Esophagus squamous epithelium (tissue), 5 donors: ENCODE measurements at regions of chr3 and their contacts with region 1.

Region 1: GRCh38 chr3:53195602-53196574 is 34.9 kb downstream of the PRKCD start:
- DNase-seq: no peak
- H3K4me3 ChIP-seq: peak overlapping the region in 1 of 4 donors; percentile 13
- H3K27ac ChIP-seq: no peak overlapping the region
- H3K4me1 ChIP-seq: peaks cover 0 to 45% (median 11%) of the 10 kb centered on the region in 3 donors
- H3K27me3 ChIP-seq: no peaks in the 10 kb centered on the region
- CTCF ChIP-seq: peak; percentile 97 to 100 (median 98)
- POLR2A ChIP-seq: no peak

Region 2: DNA sequence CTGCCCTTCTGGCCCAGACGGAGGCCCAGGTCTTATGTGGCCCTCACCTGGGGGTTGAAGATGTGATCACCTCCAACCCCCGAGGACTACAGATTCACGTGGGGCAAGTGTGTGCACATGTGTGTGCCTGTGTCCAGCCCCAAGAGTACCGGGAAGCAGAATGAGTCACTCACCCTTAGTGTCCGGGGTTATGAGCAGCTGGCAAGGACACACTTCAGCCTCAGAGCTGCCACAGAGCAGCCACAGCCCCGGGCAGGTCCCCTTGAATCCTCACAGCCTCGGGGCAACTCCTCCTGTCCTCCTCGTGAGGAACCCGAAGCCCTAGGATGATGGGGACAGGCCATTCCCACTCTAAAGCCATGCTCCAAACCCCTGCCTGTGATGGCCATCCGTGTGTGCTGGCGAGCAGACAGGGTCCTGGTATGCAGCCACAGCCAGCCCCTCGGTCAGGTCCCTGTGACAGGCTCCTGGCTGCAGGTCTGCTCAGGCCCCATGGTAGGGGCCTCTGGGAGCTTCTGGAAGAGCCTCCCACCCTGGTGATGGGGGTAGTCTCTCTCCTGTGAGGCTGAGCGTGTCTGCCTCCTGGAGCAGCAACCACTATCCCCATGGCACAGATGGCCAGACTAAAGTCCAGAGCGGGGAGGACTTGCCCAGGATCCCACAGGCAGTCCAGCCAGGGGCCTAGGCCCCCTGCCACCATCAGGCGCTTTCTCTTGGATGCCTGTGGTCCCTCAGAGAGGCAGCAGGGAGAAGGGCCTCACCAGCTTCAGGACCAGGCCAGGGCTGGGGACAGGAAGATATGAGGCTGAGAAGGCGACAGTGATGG is 699.9 kb before region 1 on chr3:
- intact Hi-C with region 1: no loop called
- DNase-seq: no peak
- H3K4me3 ChIP-seq: peak overlapping the region in 3 of 4 donors; percentile 30 to 63 (median 42)
- H3K27ac ChIP-seq: peak overlapping the region; percentile 45 to 88 (median 72)
- H3K4me1 ChIP-seq: peaks cover 10 to 80% (median 32%) of the 10 kb centered on the region in 3 donors
- H3K27me3 ChIP-seq: no peaks in the 10 kb centered on the region
- CTCF ChIP-seq: no peak
- POLR2A ChIP-seq: no peak

Region 3: DNA sequence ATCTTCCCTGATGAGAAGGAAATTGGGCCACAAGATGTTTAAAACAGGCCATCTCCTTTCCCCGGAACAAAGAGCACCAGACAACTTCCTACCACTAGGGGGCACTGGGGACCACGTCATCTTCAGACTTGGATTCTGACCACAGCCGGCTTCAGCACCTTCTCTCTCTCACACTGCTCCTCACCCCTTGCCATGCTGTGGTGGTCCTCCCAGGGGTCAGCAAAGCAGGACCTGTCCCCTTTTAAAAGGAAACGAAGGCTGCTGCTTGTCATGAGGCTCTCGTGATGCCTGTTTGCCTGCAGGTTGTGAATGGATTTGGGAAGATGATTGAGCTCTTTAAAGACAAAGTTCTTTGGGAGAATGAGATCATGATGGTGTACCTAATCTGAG is 81.9 kb before region 1 on chr3:
- intact Hi-C with region 1: loop called (anchors 5 kb)
- DNase-seq: peak; percentile 19
- H3K4me3 ChIP-seq: no peak overlapping the region
- H3K27ac ChIP-seq: peak overlapping the region in 1 of 4 donors; percentile 9
- H3K4me1 ChIP-seq: peaks cover 12 to 29% (median 13%) of the 10 kb centered on the region in 3 donors
- H3K27me3 ChIP-seq: no peaks in the 10 kb centered on the region
- CTCF ChIP-seq: peak; percentile 85 to 92 (median 90)
- POLR2A ChIP-seq: no peak

Region 4: DNA sequence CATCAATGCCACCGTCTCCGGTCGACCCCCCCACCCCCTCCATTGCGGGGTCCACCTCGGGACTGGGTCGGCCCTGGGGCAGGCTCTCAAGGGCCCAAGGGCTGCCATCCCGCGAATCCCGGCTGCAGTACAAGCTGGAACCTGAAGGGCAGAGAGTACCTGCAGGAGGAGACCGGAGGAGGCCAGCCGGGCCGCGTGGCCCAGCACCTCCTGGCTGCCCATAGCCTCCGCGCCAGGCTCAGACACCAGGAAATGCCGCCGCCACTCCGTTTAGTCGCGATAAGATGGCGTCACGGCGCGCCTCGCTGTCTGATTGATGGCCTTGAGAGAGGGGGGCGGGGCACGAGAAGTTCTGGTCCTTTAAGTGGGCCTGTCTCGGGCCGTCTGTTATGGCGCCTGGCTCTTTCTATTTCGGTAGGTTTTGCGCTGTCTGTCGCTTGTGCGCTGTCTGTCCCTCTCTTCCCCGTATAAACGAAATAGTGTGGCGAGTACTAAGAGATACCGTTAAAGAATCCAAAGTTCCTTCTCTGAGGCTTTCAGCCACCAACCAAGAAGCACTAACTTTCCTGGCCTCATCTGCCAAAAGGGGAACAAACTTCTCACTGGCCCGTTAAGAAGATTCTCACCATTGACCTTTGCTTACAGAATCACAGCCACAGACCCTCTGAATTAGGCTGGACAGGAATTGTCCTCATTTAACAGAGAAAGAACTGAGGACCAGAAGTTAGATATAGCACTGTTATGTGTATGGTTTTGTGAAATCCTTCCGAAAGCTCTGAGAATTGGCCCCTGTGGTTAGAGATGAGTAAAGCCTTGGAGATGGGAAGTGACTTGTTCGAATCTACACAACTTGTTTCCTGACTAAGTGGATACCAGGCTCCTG is 65.5 kb before region 1 on chr3 and contains the start of gene RFT1:
- intact Hi-C with region 1: loop called (anchors 5 kb)
- DNase-seq: peak; percentile 96
- H3K4me3 ChIP-seq: peak within 1 kb of the TSS; percentile 71 to 98 (median 95)
- H3K27ac ChIP-seq: peak within 1 kb of the TSS; percentile 88 to 93 (median 92)
- H3K4me1 ChIP-seq: peaks cover 11 to 40% (median 19%) of the 10 kb centered on the region in 3 donors
- H3K27me3 ChIP-seq: no peaks in the 10 kb centered on the region
- CTCF ChIP-seq: peak in 4 of 6 experiments; percentile 9 to 50 (median 19)
- POLR2A ChIP-seq: peak in 3 of 4 donors; percentile 60 to 70 (median 65)
- total RNA-seq, gene RFT1: 4.9 to 18.2 (median 12.8) TPM

Region 5: GRCh38 chr3:53160660-53161449 is 35.0 kb before region 1 on chr3 and contains the start of gene PRKCD:
- intact Hi-C with region 1: no loop called
- DNase-seq: peak; percentile 33
- H3K4me3 ChIP-seq: peak within 1 kb of the TSS; percentile 84 to 96 (median 92)
- H3K27ac ChIP-seq: peak within 1 kb of the TSS; percentile 88 to 98 (median 93)
- H3K4me1 ChIP-seq: peaks cover 38 to 90% (median 46%) of the 10 kb centered on the region in 3 donors
- H3K27me3 ChIP-seq: peaks cover 0 to 18% (median 0%) of the 10 kb centered on the region in 4 donors
- CTCF ChIP-seq: peak; percentile 25 to 64 (median 52)
- POLR2A ChIP-seq: peak in 2 of 4 donors; percentile 60 to 80
- total RNA-seq, gene PRKCD: 8.8 to 21.5 (median 20.1) TPM

Region 6: DNA sequence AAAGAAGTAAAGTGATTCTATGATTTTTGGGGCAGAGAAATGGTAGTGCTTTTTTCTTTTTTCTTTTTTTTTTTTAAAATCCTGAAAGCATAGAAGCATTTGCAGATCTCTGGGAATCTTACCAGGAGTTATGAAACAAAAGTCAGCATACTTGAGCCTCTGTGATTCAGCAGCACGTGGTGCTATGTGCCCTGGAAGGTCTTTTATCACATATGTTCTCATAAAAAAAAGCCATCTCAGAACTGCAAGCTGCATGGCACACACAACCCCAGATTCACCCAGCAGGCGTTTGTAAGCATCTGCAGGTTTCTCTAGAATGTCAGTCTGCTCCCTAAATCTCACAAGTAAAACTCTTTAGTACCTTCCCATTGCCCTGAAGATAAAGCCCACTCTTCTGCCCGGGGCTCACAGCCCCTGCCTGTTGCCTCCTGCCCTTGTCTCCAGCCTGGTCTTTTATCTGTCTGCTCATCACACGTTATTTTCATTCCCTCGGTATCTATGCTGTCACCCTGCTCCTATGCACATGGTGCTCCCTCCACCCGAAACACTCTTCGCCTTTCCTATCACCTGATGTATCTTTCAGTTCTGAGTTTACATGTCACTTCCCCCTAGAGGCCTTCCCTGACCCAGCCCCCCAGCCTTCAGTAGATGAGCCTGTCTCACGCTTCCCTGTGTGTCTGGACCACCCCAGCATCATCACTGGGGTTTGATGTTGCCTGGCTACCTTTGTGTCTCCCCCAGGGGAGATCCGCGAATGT is 577.9 kb after region 1 on chr3:
- intact Hi-C with region 1: no loop called
- DNase-seq: no peak
- H3K4me3 ChIP-seq: no peak overlapping the region
- H3K27ac ChIP-seq: no peak overlapping the region
- H3K4me1 ChIP-seq: peaks cover 0 to 31% (median 0%) of the 10 kb centered on the region in 3 donors
- H3K27me3 ChIP-seq: peaks cover 0 to 11% (median 0%) of the 10 kb centered on the region in 4 donors
- CTCF ChIP-seq: no peak
- POLR2A ChIP-seq: no peak